ENCODE measurements at regions of chr20 and their contacts with region 1.

Region 1: DNA sequence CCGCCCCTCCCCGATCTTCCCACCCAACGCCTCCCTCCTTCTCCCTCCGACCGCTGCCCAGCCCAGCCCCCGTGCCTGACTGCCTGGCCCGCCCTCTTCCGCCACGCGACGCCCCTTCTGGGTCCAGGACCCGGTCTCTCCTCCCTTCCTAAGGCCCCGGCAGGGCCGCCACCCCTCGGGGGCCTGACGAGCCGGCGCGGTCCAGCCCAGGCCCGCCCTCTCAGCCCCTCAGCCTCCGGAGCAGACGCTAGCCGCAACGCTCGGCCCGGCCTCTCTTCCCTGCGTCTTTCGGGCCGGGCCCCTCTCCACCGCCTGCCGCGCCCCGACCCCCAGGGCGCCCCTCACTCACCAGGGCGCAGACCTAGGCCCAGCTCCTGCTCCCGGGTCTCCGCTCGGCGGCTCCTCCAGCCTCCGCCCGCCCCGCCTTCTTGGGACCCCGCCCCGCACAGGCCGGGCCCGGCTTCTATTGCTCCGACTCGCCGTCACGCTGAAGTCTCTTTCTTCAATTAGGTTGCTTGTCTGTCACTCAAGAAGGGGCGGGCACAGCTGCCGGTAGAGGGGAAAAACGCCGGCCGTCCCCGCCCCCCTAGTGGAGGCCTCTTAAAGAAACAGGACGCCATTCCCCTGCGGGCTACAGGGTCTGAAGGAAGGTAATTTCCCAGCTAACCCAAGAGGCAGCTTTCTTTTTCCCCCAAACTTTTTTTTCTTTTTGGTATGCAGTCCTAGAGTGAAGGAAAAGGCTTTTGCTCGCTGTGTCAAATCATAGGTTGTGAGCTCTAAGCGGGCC is at the start of gene ELMO2:
- DNase-seq: peak; percentile 90
- ATAC-seq: peak; percentile 90
- H3K4me3 Mint-ChIP-seq: peak within 1 kb of the TSS; percentile 94
- H3K27ac Mint-ChIP-seq: peak within 1 kb of the TSS; percentile 88
- H3K4me1 Mint-ChIP-seq: peaks cover 47% of the 10 kb centered on the region
- H3K27me3 Mint-ChIP-seq: no peaks in the 10 kb centered on the region
- CTCF ChIP-seq: no peak
- total RNA-seq, gene ELMO2: 39.0 and 45.6 TPM in 2 replicates

Region 2: GRCh38 chr20:45910670-45911485 is 495.5 kb before region 1 on chr20:
- CTCF ChIA-PET with region 1: no interaction called
- POLR2A ChIA-PET with region 1: no interaction called
- intact Hi-C with region 1: loop called (anchors 2 kb)
- DNase-seq: peak; percentile 97
- ATAC-seq: peak; percentile 92
- H3K4me3 Mint-ChIP-seq: peak overlapping the region; percentile 90
- H3K27ac Mint-ChIP-seq: peak overlapping the region; percentile 83
- H3K4me1 Mint-ChIP-seq: peaks cover 31% of the 10 kb centered on the region
- H3K27me3 Mint-ChIP-seq: peaks cover 6% of the 10 kb centered on the region
- CTCF ChIP-seq: no peak

Region 3: DNA sequence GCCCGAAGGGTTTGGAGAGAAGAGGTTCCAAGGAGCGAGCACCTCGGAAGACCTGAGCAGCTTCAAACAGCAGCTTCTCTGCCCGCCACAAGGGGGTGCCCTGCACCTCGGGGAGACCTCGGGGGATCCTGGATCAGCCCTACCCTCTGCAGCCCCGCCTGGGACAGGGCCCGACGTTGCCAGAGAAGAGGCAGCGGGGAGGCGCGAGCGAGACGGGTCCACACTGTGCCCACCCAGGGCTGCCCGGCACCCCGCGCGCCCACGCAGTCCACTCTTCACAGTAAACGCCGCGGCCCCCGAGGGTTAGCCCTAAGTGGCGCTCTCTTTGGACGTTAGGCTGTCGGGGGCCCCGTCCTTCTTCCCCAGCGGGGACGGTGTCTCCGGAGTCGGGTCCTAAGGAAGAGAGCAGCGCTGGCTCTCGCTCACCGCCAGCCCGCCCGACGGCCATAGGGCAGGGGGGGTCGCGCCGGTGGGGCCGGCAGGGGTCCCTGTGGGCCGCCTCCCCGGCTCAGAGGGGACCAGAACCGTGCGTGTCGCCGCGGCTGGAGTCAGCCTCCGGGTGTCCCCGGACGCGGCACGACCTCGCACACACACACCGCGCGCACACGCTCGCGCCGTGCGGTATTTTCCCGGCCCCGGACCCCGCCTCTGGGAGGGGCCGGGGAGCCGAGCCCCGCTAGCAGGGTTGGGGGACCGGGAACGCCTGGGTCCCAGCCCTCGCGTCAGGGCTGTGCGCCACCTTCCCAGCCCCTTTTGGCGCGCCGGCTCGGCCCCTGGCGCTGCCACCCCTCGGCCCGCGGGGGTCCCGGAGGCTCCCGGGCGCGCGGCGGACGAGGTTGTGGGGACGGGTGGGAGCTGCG is 99.0 kb before region 1 on chr20:
- CTCF ChIA-PET with region 1: interaction called, 12 read pairs
- POLR2A ChIA-PET with region 1: interaction called, 6 read pairs
- intact Hi-C with region 1: loop called (anchors 1 kb)
- DNase-seq: peak; percentile 61
- ATAC-seq: peak; percentile 87
- H3K4me3 Mint-ChIP-seq: peak overlapping the region; percentile 16
- H3K27ac Mint-ChIP-seq: no peak overlapping the region
- H3K4me1 Mint-ChIP-seq: peaks cover 11% of the 10 kb centered on the region
- H3K27me3 Mint-ChIP-seq: peaks cover 67% of the 10 kb centered on the region
- CTCF ChIP-seq: no peak

Region 4: GRCh38 chr20:46349035-46349741 is 57.2 kb before region 1 on chr20:
- CTCF ChIA-PET with region 1: interaction called, 3 read pairs
- POLR2A ChIA-PET with region 1: interaction called, 5 read pairs
- intact Hi-C with region 1: loop called (anchors 2 kb)
- DNase-seq: peak; percentile 40
- ATAC-seq: no peak
- H3K4me3 Mint-ChIP-seq: no peak overlapping the region
- H3K27ac Mint-ChIP-seq: no peak overlapping the region
- H3K4me1 Mint-ChIP-seq: peaks cover 28% of the 10 kb centered on the region
- H3K27me3 Mint-ChIP-seq: no peaks in the 10 kb centered on the region
- CTCF ChIP-seq: no peak

Region 5: GRCh38 chr20:46363800-46364634 is 42.4 kb before region 1 on chr20:
- CTCF ChIA-PET with region 1: interaction called, 9 read pairs
- POLR2A ChIA-PET with region 1: interaction called, 46 read pairs
- intact Hi-C with region 1: loop called (anchors 1 kb)
- DNase-seq: peak; percentile 84
- ATAC-seq: peak; percentile 79
- H3K4me3 Mint-ChIP-seq: peak overlapping the region; percentile 93
- H3K27ac Mint-ChIP-seq: peak overlapping the region; percentile 90
- H3K4me1 Mint-ChIP-seq: peaks cover 54% of the 10 kb centered on the region
- H3K27me3 Mint-ChIP-seq: no peaks in the 10 kb centered on the region
- CTCF ChIP-seq: no peak

Region 6: DNA sequence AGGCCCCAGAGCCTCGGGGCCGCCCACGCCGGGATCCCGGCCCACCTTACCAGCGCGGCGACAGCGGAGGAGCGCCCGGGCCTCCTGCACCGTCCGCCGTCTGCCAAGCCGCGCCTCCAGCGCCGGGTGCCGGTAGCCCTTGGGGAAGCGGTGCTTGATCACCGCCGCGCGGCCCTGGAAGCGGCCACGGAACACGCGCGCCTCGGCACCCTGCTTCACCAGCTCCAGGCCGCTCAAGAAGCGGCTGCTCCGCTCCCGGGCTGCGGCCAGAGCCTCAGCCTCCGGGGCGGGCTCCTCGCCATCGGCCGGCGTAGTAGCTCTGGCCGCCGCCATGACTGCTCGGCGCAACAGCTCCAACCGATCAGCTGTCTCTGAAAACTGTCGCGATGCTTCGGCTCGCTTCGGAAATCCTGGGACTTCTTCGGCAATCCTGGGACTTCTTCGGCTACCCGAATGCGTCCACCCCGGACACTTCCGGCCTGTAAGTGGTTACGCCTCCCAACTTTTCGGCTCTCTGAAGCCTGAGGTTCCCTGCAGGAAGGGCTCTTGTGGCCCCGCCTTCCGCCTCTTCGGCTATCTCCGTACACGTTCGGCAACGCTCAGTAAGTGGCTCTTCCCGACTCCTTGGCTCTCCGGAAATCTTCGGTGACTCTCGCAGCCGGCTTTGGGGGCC is 282.8 kb after region 1 on chr20 and contains the start of gene TP53RK:
- CTCF ChIA-PET with region 1: no interaction called
- POLR2A ChIA-PET with region 1: no interaction called
- intact Hi-C with region 1: loop called (anchors 1 kb)
- DNase-seq: peak; percentile 89
- ATAC-seq: peak; percentile 97
- H3K4me3 Mint-ChIP-seq: peak within 1 kb of the TSS; percentile 97
- H3K27ac Mint-ChIP-seq: peak within 1 kb of the TSS; percentile 95
- H3K4me1 Mint-ChIP-seq: peaks cover 43% of the 10 kb centered on the region
- H3K27me3 Mint-ChIP-seq: no peaks in the 10 kb centered on the region
- CTCF ChIP-seq: no peak
- total RNA-seq, gene TP53RK: 18.6 and 18.8 TPM in 2 replicates